ENCODE measurements at regions of chr11 and their contacts with region 1.

Region 1: GRCh38 chr11:43567396-43567975 is 113.1 kb upstream of the HSD17B12 start:
- DNase-seq: no peak
- ATAC-seq: peak in 2 of 4 donors; percentile 34 to 62
- H3K4me3 ChIP-seq: no peak overlapping the region
- H3K27ac ChIP-seq: no peak overlapping the region
- H3K4me1 ChIP-seq: no peaks in the 10 kb centered on the region
- H3K27me3 ChIP-seq: peaks cover 0 to 24% (median 6%) of the 10 kb centered on the region in 3 donors
- CTCF ChIP-seq: peak; percentile 60

Region 2: DNA sequence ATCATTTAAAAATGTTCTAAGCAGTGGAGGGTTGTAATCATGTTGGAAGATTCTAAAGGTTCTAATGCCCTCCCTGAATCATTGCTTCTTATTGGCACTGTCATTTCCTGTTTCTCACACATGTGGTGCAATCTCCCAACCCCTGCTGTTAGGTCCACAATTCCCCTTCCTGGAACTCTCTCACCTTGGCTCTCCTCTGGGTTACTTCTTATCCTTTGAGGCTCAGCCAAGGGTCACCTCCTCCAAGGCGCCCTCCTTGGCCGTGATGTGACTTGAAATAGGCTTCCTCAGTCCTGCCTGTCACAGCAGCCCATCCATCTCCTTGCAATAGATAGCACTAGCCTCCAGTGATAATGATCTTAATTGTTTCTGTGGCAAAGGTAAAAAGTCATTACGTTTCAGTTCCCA is 59.0 kb before region 1 on chr11:
- intact Hi-C with region 1: loop called in 1 of 2 experiments (anchors 5 kb)
- DNase-seq: no peak
- ATAC-seq: no peak
- H3K4me3 ChIP-seq: no peak overlapping the region
- H3K27ac ChIP-seq: no peak overlapping the region
- H3K4me1 ChIP-seq: no peaks in the 10 kb centered on the region
- H3K27me3 ChIP-seq: no peaks in the 10 kb centered on the region
- CTCF ChIP-seq: no peak

Measured in psoas muscle (tissue), 8 donors.